PC-3 (cell line): ENCODE measurements at regions of chr3 and their contacts with region 1.

Region 1: DNA sequence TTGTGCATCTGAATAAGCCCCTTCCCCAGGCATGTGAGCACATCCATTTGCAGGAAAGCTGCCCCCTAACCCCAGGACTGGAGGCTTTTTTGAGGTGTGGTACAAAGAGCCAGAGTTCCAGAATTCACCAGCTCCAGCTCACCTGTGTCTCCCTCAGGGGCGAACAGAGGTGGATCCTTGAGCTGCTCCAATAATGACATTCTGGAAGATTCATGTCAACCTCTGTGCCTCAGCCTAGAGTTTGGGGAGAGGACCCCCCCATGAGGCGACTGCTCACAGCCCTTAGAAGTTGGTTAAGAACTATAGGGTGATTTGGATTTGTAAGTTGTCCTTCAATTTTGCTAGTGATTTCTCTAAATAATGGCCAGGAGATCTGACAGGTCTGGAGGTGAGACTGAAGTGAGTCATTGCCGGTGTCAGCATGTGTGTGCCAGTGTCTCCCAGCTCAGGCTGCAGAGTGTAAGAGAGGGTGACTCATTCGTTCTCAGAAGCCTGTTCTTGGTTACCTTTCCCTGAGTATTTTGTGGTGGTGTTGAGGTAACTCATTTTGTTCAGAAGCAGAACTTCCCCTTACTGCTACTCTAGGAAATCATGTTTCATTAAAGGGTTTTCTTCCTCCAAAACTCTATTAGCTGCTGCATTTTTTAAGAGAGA is 136.9 kb upstream of the TOPAZ1 start:
- DNase-seq: peak; percentile 93
- ATAC-seq: peak; percentile 100
- H3K4me3 ChIP-seq: no peak overlapping the region
- H3K27ac ChIP-seq: peak overlapping the region; percentile 60
- H3K4me1 ChIP-seq: peaks cover 22% of the 10 kb centered on the region
- H3K27me3 ChIP-seq: no peaks in the 10 kb centered on the region
- CTCF ChIP-seq: no peak

Region 2: GRCh38 chr3:43870120-43870519 is 234.7 kb before region 1 on chr3:
- CTCF ChIA-PET with region 1: no interaction called
- POLR2A ChIA-PET with region 1: no interaction called
- intact Hi-C with region 1: loop called (anchors 5 kb)
- DNase-seq: peak; percentile 93
- ATAC-seq: peak; percentile 52
- H3K4me3 ChIP-seq: no peak overlapping the region
- H3K27ac ChIP-seq: peak overlapping the region; percentile 97
- H3K4me1 ChIP-seq: peaks cover 95% of the 10 kb centered on the region
- H3K27me3 ChIP-seq: no peaks in the 10 kb centered on the region
- CTCF ChIP-seq: no peak

Region 3: GRCh38 chr3:44074181-44074580 is 30.6 kb before region 1 on chr3:
- CTCF ChIA-PET with region 1: no interaction called
- POLR2A ChIA-PET with region 1: no interaction called
- intact Hi-C with region 1: loop called (anchors 2 kb)
- DNase-seq: peak; percentile 74
- ATAC-seq: peak; percentile 64
- H3K4me3 ChIP-seq: no peak overlapping the region
- H3K27ac ChIP-seq: no peak overlapping the region
- H3K4me1 ChIP-seq: peaks cover 30% of the 10 kb centered on the region
- H3K27me3 ChIP-seq: no peaks in the 10 kb centered on the region
- CTCF ChIP-seq: no peak

Region 4: DNA sequence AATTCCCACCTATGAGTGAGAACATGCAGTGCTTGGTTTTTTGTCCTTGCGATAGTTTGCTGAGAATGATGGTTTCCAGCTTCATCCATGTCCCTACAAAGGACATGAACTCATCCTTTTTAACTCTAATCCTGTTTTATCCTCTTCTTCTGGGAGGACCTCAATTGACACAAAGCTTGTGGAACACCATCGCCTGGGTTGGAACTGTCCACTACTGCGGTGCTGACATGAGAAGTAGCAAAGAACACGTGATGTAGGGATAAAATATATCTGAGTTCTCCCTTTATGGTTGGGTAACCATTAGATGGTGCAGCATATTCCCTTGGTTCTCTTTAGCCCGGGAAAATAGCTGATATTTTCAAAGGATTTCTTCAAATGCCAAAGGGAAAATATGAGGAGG is 31.6 kb after region 1 on chr3:
- CTCF ChIA-PET with region 1: no interaction called
- POLR2A ChIA-PET with region 1: no interaction called
- intact Hi-C with region 1: no loop called
- DNase-seq: peak; percentile 31
- ATAC-seq: no peak
- H3K4me3 ChIP-seq: no peak overlapping the region
- H3K27ac ChIP-seq: no peak overlapping the region
- H3K4me1 ChIP-seq: no peaks in the 10 kb centered on the region
- H3K27me3 ChIP-seq: no peaks in the 10 kb centered on the region
- CTCF ChIP-seq: no peak